ENCODE measurements at regions of chr12 and their contacts with region 1.

Region 1: DNA sequence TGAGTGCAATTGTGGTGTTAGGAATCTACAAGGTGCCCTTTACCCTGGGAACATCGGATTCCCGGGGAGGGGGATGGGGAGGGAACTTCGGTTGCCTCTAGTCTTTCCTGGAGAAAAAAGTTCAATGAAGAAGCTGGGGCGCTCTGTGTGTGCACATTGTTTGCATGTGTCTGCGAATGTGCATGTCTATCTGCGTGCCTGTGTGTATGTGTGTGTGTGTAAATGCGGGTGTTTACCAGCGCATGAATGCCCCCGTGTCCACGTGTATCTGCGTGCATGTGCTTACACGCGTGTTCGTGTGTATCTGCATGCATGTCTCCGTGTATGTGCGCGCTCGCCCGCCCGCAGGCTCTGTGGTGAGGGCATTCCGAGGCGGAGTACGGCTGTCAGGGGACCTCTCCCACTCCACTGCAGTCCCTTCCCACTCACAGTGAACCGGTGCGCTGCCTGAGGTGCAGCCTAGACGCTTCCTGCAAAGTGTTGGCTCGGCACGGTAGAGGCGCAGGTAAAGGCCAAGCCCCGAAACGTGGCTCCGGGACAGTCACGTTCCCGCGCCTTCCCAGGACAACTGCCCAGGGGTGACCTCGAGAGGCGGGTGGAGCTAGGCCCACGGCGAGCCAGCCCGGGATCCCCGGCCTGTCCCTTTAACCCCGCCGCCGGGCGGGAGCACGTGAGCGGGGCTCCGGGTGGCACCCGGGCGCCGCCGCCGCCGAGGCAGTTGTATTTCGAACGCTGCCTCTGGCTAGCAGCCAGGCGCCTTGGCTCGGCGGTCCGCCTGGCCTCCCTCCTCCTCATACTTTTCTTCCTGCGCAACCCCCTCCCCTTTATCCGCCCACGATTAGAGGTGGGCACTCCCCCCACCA is 539 bp upstream of the HMGA2 start:
- DNase-seq: peak; percentile 76
- ATAC-seq: peak; percentile 62
- H3K4me3 ChIP-seq: peak overlapping the region; percentile 76 to 98 (median 97)
- H3K27ac ChIP-seq: peak overlapping the region; percentile 84
- H3K4me1 ChIP-seq: peaks cover 22% of the 10 kb centered on the region
- H3K27me3 ChIP-seq: no peaks in the 10 kb centered on the region; a peak in 1 of 5 replicates
- CTCF ChIP-seq: no peak
- EP300 ChIP-seq: 0 out of 4 replicates have a peak, but pooled peaks of 1 of the 2 experiments have one; percentile 13
- POLR2A ChIP-seq: peak; percentile 58 to 71
- RAD21 ChIP-seq: peak; percentile 39; the same call in 1 of the 2 replicates

Region 2: GRCh38 chr12:65306366-65307168 is 517.2 kb before region 1 on chr12:
- CTCF ChIA-PET with region 1: no interaction called
- POLR2A ChIA-PET with region 1: no interaction called
- in situ Hi-C with region 1: no loop called
- intact Hi-C with region 1: loop called (anchors 10 kb)
- DNase-seq: peak; percentile 37
- ATAC-seq: peak; percentile 66
- H3K4me3 ChIP-seq: no peak overlapping the region
- H3K27ac ChIP-seq: no peak overlapping the region
- H3K4me1 ChIP-seq: peaks cover 6% of the 10 kb centered on the region; the same call in 1 of the 2 replicates
- H3K27me3 ChIP-seq: no peaks in the 10 kb centered on the region
- CTCF ChIP-seq: peak; percentile 75
- EP300 ChIP-seq: no peak
- POLR2A ChIP-seq: no peak
- RAD21 ChIP-seq: peak; percentile 66

Region 3: GRCh38 chr12:65443038-65443437 is 380.7 kb before region 1 on chr12:
- CTCF ChIA-PET with region 1: no interaction called
- POLR2A ChIA-PET with region 1: no interaction called
- in situ Hi-C with region 1: no loop called
- intact Hi-C with region 1: no loop called
- DNase-seq: no peak
- ATAC-seq: no peak
- H3K4me3 ChIP-seq: no peak overlapping the region
- H3K27ac ChIP-seq: no peak overlapping the region
- H3K4me1 ChIP-seq: no peaks in the 10 kb centered on the region
- H3K27me3 ChIP-seq: no peaks in the 10 kb centered on the region
- CTCF ChIP-seq: no peak
- EP300 ChIP-seq: no peak
- POLR2A ChIP-seq: no peak
- RAD21 ChIP-seq: no peak

Region 4: DNA sequence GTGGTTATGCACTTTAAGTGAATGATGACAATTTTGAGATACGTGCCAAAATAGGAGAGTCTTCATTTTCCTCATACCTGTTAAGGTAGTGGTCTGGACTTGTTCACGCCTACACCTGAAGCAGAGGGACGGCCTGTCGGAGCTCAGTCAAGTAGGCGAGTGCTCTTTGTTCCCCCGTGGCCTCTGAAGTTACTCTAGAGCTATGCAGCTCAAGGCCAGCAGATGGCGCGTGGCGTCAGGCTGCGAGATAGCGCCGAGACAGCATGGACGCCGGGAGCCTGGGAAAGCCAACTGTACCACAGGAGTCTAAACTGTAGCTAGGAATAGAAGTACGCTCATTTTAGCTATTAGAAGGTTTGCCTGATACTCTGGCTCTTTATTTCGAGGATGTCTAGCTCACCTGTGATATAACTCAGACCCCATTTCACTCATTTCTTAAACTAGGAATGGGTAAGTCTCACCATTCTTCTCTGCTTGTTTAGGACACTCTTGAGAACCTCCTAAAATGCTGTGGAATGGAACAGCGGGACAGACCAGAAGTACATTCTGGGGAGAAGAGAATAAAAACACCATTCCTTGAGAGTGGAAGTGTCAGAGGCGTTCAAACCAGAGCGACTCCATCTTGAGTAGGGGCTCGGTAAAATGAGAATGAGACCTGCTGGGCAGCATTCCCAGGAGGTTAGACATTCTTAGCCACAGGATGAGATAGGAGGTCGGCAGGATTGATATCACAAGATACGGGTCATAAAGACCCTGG is 266.9 kb before region 1 on chr12:
- CTCF ChIA-PET with region 1: no interaction called
- POLR2A ChIA-PET with region 1: no interaction called
- in situ Hi-C with region 1: no loop called
- intact Hi-C with region 1: loop called (anchors 10 kb)
- DNase-seq: peak; percentile 53
- ATAC-seq: peak; percentile 100
- H3K4me3 ChIP-seq: no peak overlapping the region
- H3K27ac ChIP-seq: no peak overlapping the region
- H3K4me1 ChIP-seq: 0 out of 2 replicates have a peak, but pooled peaks cover 6% of the 10 kb centered on the region
- H3K27me3 ChIP-seq: peaks cover 0 to 4% of the 10 kb centered on the region in 2 experiments; a peak in 2 of 5 replicates
- CTCF ChIP-seq: peak; percentile 96
- EP300 ChIP-seq: no peak
- POLR2A ChIP-seq: no peak
- RAD21 ChIP-seq: peak; percentile 92

Region 5: GRCh38 chr12:65740873-65741600 is 82.7 kb before region 1 on chr12:
- CTCF ChIA-PET with region 1: no interaction called
- POLR2A ChIA-PET with region 1: no interaction called
- in situ Hi-C with region 1: loop called (anchors 5 kb)
- intact Hi-C with region 1: loop called (anchors 5 kb)
- DNase-seq: peak; percentile 69
- ATAC-seq: peak; percentile 93
- H3K4me3 ChIP-seq: peak overlapping the region; percentile 66 to 81 (median 80)
- H3K27ac ChIP-seq: no peak overlapping the region
- H3K4me1 ChIP-seq: peaks cover 7% of the 10 kb centered on the region; the same call in 1 of the 2 replicates
- H3K27me3 ChIP-seq: peaks cover 3 to 14% of the 10 kb centered on the region in 2 experiments; a peak in 3 of 5 replicates
- CTCF ChIP-seq: no peak
- EP300 ChIP-seq: no peak
- POLR2A ChIP-seq: 0 out of 4 replicates have a peak, but pooled peaks of 1 of the 2 experiments have one; percentile 33
- RAD21 ChIP-seq: no peak

Region 6: GRCh38 chr12:65895759-65896656 is 72.3 kb after region 1 on chr12:
- CTCF ChIA-PET with region 1: no interaction called
- POLR2A ChIA-PET with region 1: interaction called, 4 read pairs
- in situ Hi-C with region 1: no loop called
- intact Hi-C with region 1: loop called (anchors 2 kb)
- DNase-seq: peak; percentile 97
- ATAC-seq: peak; percentile 96
- H3K4me3 ChIP-seq: peak overlapping the region; percentile 15 to 60 (median 53); a peak in 5 of 6 replicates
- H3K27ac ChIP-seq: peak overlapping the region; percentile 92
- H3K4me1 ChIP-seq: peaks cover 91% of the 10 kb centered on the region
- H3K27me3 ChIP-seq: no peaks in the 10 kb centered on the region
- CTCF ChIP-seq: no peak
- EP300 ChIP-seq: no peak; a peak in 1 of 4 replicates
- POLR2A ChIP-seq: peak; percentile 56 to 63; a peak in 3 of 4 replicates
- RAD21 ChIP-seq: no peak

Region 7: GRCh38 chr12:65937161-65937641 is 113.5 kb after region 1 on chr12:
- CTCF ChIA-PET with region 1: no interaction called
- POLR2A ChIA-PET with region 1: interaction called, 4 read pairs
- in situ Hi-C with region 1: no loop called
- intact Hi-C with region 1: loop called (anchors 5 kb)
- DNase-seq: peak; percentile 97
- ATAC-seq: peak; percentile 98
- H3K4me3 ChIP-seq: no peak overlapping the region; a peak in 1 of 6 replicates
- H3K27ac ChIP-seq: peak overlapping the region; percentile 70
- H3K4me1 ChIP-seq: peaks cover 85% of the 10 kb centered on the region
- H3K27me3 ChIP-seq: no peaks in the 10 kb centered on the region
- CTCF ChIP-seq: 0 out of 2 replicates have a peak, but pooled peaks have one; percentile 2
- EP300 ChIP-seq: peak in 1 of 2 experiments; percentile 77; a peak in 2 of 4 replicates
- POLR2A ChIP-seq: no peak
- RAD21 ChIP-seq: no peak

Region 8: GRCh38 chr12:65986047-65986446 is 162.3 kb after region 1 on chr12:
- CTCF ChIA-PET with region 1: no interaction called
- POLR2A ChIA-PET with region 1: no interaction called
- in situ Hi-C with region 1: no loop called
- intact Hi-C with region 1: loop called (anchors 2 kb)
- DNase-seq: no peak
- ATAC-seq: no peak
- H3K4me3 ChIP-seq: no peak overlapping the region
- H3K27ac ChIP-seq: no peak overlapping the region
- H3K4me1 ChIP-seq: peaks cover 16% of the 10 kb centered on the region
- H3K27me3 ChIP-seq: no peaks in the 10 kb centered on the region
- CTCF ChIP-seq: peak; percentile 33
- EP300 ChIP-seq: no peak
- POLR2A ChIP-seq: no peak
- RAD21 ChIP-seq: no peak

Measured in HepG2 (cell line).